ENCODE measurements at regions of chr6 and their contacts with region 1.

Region 1: GRCh38 chr6:52304983-52305390 is 20.4 kb upstream of the MCM3 start:
- DNase-seq: no peak
- ATAC-seq: peak; percentile 21
- H3K4me3 Mint-ChIP-seq: peak overlapping the region; percentile 51
- H3K27ac Mint-ChIP-seq: peak overlapping the region; percentile 81
- H3K4me1 Mint-ChIP-seq: peaks cover 40% of the 10 kb centered on the region
- H3K27me3 Mint-ChIP-seq: no peaks in the 10 kb centered on the region

Region 2: GRCh38 chr6:52077180-52077884 is 227.7 kb before region 1 on chr6:
- POLR2A ChIA-PET with region 1: no interaction called
- DNase-seq: no peak
- ATAC-seq: no peak
- H3K4me3 Mint-ChIP-seq: no peak overlapping the region
- H3K27ac Mint-ChIP-seq: no peak overlapping the region
- H3K4me1 Mint-ChIP-seq: no peaks in the 10 kb centered on the region
- H3K27me3 Mint-ChIP-seq: peaks cover 33% of the 10 kb centered on the region

Region 3: DNA sequence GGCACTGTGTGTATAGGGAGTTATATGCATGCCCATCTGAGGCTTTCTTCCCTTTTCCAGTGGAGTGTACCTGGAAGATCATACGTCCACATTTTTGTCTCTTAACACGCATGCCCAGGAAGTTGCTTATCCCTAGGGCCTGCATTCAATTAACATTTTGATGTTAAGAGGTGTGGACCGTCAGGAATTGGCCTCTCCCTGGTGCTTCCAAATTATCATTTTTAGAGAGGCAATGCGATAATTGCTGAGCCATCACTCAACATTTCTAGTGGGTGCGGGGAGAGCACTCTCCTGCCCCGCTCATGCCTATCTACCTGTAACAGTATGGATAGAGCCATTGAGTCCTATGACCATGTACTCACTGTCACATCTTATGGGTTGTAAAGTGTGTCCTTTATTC is 19.2 kb after region 1 on chr6:
- POLR2A ChIA-PET with region 1: no interaction called
- DNase-seq: no peak
- ATAC-seq: no peak
- H3K4me3 Mint-ChIP-seq: no peak overlapping the region
- H3K27ac Mint-ChIP-seq: no peak overlapping the region
- H3K4me1 Mint-ChIP-seq: peaks cover 1% of the 10 kb centered on the region
- H3K27me3 Mint-ChIP-seq: peaks cover 2% of the 10 kb centered on the region

Region 4: GRCh38 chr6:52389626-52390360 is 84.8 kb after region 1 on chr6:
- POLR2A ChIA-PET with region 1: interaction called, 16 read pairs
- DNase-seq: peak; percentile 49
- ATAC-seq: peak; percentile 54
- H3K4me3 Mint-ChIP-seq: peak overlapping the region; percentile 80
- H3K27ac Mint-ChIP-seq: peak overlapping the region; percentile 93
- H3K4me1 Mint-ChIP-seq: peaks cover 59% of the 10 kb centered on the region
- H3K27me3 Mint-ChIP-seq: no peaks in the 10 kb centered on the region

Region 5: DNA sequence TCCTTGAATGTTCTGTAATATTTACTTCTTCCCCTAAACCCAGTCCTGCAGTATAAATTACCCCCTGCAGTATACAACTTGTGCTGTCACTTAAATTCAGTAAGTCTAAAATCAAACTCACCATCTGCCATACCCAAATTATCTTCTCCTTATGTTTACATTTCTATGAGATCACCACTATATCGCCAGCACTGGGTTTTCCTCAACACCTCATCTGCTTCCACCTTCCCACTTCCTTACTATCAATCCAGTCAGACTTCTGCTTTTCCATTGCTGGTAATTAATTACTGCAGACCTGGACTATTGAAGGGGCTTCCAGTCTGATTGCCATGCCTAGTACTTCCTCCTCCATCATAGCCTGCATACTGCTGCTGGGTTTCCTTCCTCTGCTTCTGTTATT is 130.4 kb after region 1 on chr6:
- POLR2A ChIA-PET with region 1: no interaction called
- DNase-seq: no peak
- ATAC-seq: no peak
- H3K4me3 Mint-ChIP-seq: no peak overlapping the region
- H3K27ac Mint-ChIP-seq: no peak overlapping the region
- H3K4me1 Mint-ChIP-seq: no peaks in the 10 kb centered on the region
- H3K27me3 Mint-ChIP-seq: peaks cover 5% of the 10 kb centered on the region

Region 6: DNA sequence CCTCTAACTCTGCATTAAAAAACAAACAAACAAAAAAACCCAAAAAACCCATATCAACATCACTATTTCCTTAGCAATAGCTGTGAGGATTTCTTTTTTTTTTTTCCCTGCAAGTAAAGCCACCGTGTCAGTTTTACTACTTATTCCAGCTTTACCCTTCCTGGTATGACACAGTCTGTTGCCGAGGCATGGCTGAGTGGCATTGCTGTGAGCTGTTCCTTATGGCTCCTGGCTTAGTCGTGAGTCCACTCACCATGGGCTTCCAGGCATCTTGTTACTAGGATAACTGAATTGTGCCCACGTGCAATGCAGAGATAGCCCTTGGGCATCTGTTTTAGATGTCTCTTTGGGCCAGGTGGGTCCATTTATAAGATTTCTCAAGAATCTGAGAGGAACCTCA is 1574.6 kb after region 1 on chr6:
- POLR2A ChIA-PET with region 1: no interaction called
- DNase-seq: no peak
- ATAC-seq: no peak
- H3K4me3 Mint-ChIP-seq: no peak overlapping the region
- H3K27ac Mint-ChIP-seq: no peak overlapping the region
- H3K4me1 Mint-ChIP-seq: no peaks in the 10 kb centered on the region
- H3K27me3 Mint-ChIP-seq: no peaks in the 10 kb centered on the region

Measured in activated naive CD8-positive, alpha-beta T cell treated with anti-CD3 and anti-CD28 coated beads, Interleukin-2, amount 10 ng/mL, durations not matched to agents 7 days and 5 days (primary cell).